Mammary epithelial cell (primary cell): ENCODE measurements at regions of chr4 and their contacts with region 1.

Region 1: DNA sequence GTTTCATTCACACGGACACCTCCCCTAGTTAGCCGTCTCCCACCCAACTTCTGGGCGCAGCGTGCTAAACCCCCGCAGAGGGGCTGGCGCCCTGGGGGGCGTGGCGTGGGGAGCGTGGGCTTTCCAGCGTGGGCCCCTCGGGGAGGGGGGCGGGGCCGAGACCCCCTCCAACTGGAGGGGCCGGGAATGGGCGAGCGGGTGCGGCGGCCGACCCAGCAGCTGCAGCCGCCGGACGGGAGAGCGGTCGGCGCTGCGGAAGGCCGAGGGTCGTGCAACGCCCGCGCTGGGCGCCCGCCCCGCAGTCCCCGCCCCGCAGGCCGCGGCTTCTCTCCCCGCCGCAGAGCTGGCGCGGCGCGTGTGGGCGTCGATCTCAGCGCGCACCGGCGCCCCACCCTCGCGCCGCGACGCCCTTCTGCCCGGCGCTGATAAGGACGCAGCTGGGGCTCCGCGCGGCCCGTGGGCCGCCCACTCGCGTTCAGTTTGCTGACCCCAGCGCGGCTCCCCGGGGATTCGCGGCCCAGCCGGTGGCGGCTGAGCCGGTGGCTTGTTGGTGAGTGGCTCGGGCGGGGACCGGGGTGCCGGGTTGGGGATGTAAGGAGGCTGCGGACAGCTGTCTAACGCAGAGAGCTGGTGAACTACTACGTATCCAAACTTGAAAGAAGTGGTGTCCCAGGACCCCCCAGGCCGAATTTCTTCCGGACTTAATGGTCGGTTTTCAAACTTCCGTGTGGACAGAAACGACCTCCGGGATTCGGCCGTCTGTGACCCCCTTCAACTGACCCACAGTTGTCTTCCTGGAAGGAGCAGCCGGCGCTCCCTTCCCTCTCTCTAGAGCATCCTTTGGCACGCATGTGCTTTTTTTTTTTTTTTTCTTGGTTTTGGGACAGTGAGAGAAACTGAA is 1.5 kb downstream of the FHDC1 start:
- DNase-seq: peak; percentile 58
- H3K4me3 ChIP-seq: peak overlapping the region; percentile 88 to 91 (median 90)
- H3K27ac ChIP-seq: peak overlapping the region; percentile 52
- H3K4me1 ChIP-seq: peaks cover 16% of the 10 kb centered on the region
- H3K27me3 ChIP-seq: no peaks in the 10 kb centered on the region
- CTCF ChIP-seq: no peak

Region 2: GRCh38 chr4:151808120-151808529 is 1129.5 kb before region 1 on chr4:
- CTCF ChIA-PET with region 1: no interaction called
- dilution Hi-C with region 1: no loop called
- in situ Hi-C with region 1: no loop called
- intact Hi-C with region 1: no loop called
- DNase-seq: peak; percentile 24
- H3K4me3 ChIP-seq: no peak overlapping the region
- H3K27ac ChIP-seq: no peak overlapping the region
- H3K4me1 ChIP-seq: peaks cover 5% of the 10 kb centered on the region
- H3K27me3 ChIP-seq: no peaks in the 10 kb centered on the region
- CTCF ChIP-seq: no peak

Region 3: DNA sequence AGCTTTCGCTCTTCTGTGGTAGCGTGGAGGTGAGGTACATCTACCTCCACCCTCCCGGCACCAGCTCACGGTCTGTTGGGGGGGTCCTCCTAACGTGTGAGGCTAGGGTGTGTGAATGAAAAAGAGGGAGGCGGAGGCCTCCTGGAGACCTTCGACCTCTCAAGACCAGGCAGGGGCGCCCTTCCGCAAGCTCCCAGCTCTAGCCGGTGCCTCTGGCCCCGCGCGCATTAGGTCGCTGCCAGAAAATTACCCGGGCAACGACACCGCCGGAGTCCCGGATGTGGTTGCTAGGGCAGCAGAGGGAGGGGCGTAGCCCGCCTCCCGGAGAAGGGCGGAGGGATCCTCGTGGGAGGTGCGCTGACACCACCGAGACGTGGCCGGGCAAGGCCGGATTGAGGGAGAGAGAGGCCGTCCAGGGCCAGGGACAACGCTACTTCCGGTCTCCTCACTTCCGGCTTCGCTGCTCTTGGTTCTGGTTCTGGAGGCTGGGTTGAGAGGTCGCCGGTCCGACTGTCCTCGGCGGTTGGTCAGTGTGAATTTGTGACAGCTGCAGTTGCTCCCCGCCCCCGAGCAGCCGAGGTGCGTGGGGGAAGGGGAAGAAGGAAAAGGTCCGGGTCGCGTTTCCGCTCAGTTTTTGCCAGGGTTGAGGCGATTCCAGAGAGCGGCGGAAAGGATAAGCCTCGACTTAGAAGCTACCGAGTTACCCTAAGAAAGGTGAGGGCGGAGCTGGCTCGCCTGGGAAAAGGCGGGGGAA is 157.9 kb before region 1 on chr4 and contains the starts of genes ARFIP1 and TIGD4:
- CTCF ChIA-PET with region 1: no interaction called
- dilution Hi-C with region 1: no loop called
- in situ Hi-C with region 1: no loop called
- intact Hi-C with region 1: loop called (anchors 5 kb)
- DNase-seq: peak; percentile 97
- H3K4me3 ChIP-seq: peak within 1 kb of the TSS; percentile 64 to 80 (median 66)
- H3K27ac ChIP-seq: peak within 1 kb of the TSS; percentile 86
- H3K4me1 ChIP-seq: peaks cover 22% of the 10 kb centered on the region
- H3K27me3 ChIP-seq: no peaks in the 10 kb centered on the region
- CTCF ChIP-seq: peak in 1 of 2 donors; percentile 23
- total RNA-seq, gene ARFIP1: 34.8 to 42.8 TPM
- total RNA-seq, gene TIGD4: 0.50 to 0.71 TPM

Region 4: DNA sequence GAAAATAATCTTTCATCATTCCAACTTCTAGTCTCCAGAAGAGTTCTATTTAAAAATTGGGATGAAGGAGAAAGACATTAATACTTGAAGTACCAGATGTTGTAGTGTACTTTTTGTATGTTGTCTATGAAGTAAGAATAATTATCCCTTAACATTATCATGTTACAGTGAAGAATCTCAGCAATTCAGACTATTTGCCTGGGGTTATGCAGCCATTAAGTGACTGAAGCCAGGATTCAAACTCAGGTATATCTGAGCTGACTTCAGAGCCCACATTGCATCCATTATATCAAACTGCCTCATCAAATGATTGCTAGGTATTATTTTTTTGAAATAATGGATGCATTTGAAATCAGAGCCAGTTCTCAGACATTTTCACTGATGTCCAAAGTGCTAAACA is 77.5 kb before region 1 on chr4:
- CTCF ChIA-PET with region 1: no interaction called
- dilution Hi-C with region 1: no loop called
- in situ Hi-C with region 1: no loop called
- intact Hi-C with region 1: loop called (anchors 5 kb)
- DNase-seq: no peak
- H3K4me3 ChIP-seq: no peak overlapping the region
- H3K27ac ChIP-seq: no peak overlapping the region
- H3K4me1 ChIP-seq: no peaks in the 10 kb centered on the region
- H3K27me3 ChIP-seq: no peaks in the 10 kb centered on the region
- CTCF ChIP-seq: no peak

Region 5: GRCh38 chr4:152910521-152910920 is 27.1 kb before region 1 on chr4:
- CTCF ChIA-PET with region 1: no interaction called
- dilution Hi-C with region 1: no loop called
- in situ Hi-C with region 1: no loop called
- intact Hi-C with region 1: no loop called
- DNase-seq: no peak
- H3K4me3 ChIP-seq: no peak overlapping the region
- H3K27ac ChIP-seq: no peak overlapping the region
- H3K4me1 ChIP-seq: no peaks in the 10 kb centered on the region
- H3K27me3 ChIP-seq: no peaks in the 10 kb centered on the region
- CTCF ChIP-seq: no peak

Region 6: DNA sequence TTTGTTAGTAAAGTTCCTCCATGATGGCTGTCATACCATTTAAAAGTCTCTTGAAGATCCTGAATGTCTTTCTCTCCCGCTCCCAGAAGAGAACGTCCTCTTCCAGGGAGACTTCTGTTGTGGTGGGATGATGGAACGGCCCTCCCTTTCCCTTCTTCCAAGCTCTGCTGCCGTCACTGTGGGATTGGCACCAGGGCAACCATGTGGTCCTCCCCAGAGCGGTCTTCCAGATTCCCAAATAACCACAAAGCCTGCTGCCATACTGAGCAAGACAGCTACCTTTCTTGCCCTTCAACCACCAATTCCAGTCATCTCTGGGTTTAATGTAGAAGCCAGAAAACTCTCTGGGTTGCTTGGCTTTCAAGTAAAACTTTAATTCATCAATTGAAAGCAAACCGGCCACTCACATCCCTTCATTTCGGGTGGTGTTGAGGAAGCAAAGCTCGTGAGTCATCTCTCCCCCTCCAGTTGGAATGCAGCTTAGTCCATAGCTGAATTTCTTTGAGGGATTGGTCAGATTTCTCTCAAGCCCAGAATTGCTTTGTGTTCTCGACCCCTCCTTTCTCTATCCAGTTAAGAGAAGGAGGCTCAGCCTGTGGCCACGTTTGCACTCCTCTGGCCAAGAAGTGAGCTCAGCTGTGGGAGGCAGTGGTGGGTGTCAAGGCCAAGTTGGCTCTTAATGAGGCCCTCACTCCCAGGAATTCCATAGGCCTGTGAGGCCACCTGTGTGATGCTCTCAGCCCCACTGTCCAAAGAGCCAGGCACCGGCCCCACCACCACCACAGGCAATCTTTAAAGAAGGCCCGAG is 35.4 kb after region 1 on chr4:
- CTCF ChIA-PET with region 1: no interaction called
- dilution Hi-C with region 1: no loop called
- in situ Hi-C with region 1: no loop called
- intact Hi-C with region 1: loop called (anchors 2 kb)
- DNase-seq: peak; percentile 82
- H3K4me3 ChIP-seq: no peak overlapping the region
- H3K27ac ChIP-seq: peak overlapping the region; percentile 69
- H3K4me1 ChIP-seq: peaks cover 55% of the 10 kb centered on the region
- H3K27me3 ChIP-seq: no peaks in the 10 kb centered on the region
- CTCF ChIP-seq: no peak

Region 7: DNA sequence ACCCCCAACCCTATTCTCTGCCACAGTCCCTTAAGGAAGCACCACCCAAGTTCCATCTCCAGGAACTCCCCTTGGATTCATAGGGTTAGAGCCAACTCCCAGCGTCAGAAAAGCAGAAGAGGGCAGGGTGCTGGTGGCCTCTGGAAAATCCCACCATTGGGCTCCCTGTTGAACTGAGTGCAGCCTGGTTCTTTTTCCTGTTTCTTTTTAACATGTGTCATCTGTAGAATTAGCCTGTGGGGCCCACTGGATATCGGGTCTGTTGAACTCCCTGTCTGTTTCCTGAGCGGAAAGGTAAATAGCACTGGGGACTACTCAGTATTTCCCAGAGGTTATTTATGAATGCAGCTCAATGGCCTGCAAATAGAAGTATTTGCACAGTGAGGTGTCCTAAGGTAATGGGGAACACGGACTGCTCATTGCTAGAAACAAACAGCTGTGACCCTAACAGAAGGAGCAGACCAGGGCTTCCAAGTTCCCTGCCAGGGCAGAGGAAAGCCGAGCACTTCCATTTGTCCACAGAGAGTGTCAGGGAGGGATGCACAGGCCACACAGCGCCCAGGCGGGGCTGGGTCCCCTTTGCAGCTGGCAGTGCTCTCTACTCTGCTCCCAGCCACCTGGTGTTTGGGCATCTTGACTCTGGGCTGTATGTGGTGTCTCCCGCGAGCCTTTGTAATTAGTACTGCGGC is 101.2 kb after region 1 on chr4:
- CTCF ChIA-PET with region 1: no interaction called
- dilution Hi-C with region 1: no loop called
- in situ Hi-C with region 1: no loop called
- intact Hi-C with region 1: loop called (anchors 2 kb)
- DNase-seq: no peak
- H3K4me3 ChIP-seq: no peak overlapping the region
- H3K27ac ChIP-seq: peak overlapping the region; percentile 85
- H3K4me1 ChIP-seq: peaks cover 41% of the 10 kb centered on the region
- H3K27me3 ChIP-seq: no peaks in the 10 kb centered on the region
- CTCF ChIP-seq: no peak

Region 8: DNA sequence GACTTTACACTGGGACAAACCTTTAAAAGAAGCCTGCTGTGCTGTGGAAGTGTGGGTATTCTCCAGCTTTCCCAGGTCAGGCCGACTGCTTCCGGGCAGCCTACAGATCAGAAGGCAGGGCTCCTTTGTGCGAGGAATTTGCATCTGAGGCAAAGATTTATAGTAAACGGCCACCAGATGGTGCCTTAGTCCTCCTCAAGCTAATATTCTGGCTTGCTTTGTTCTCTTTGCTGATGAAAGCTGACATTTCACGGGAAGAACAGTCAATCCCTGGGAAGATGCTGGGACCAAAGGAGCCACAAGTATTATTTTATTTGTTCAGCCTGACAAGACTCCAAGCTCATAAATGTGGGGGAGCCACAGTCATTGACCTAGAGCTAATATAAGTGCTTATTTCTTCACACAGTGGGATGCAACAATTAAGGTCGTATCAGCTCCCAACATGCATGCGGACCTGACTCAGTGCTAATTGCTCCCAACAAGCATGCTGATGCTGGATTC is 145.9 kb after region 1 on chr4:
- CTCF ChIA-PET with region 1: interaction called, 3 read pairs
- dilution Hi-C with region 1: no loop called
- in situ Hi-C with region 1: no loop called
- intact Hi-C with region 1: loop called (anchors 1 kb)
- DNase-seq: peak; percentile 75
- H3K4me3 ChIP-seq: no peak overlapping the region
- H3K27ac ChIP-seq: no peak overlapping the region
- H3K4me1 ChIP-seq: peaks cover 21% of the 10 kb centered on the region
- H3K27me3 ChIP-seq: no peaks in the 10 kb centered on the region
- CTCF ChIP-seq: peak; percentile 58 to 65